ENCODE measurements at regions of chr3 and their contacts with region 1.

Region 1: DNA sequence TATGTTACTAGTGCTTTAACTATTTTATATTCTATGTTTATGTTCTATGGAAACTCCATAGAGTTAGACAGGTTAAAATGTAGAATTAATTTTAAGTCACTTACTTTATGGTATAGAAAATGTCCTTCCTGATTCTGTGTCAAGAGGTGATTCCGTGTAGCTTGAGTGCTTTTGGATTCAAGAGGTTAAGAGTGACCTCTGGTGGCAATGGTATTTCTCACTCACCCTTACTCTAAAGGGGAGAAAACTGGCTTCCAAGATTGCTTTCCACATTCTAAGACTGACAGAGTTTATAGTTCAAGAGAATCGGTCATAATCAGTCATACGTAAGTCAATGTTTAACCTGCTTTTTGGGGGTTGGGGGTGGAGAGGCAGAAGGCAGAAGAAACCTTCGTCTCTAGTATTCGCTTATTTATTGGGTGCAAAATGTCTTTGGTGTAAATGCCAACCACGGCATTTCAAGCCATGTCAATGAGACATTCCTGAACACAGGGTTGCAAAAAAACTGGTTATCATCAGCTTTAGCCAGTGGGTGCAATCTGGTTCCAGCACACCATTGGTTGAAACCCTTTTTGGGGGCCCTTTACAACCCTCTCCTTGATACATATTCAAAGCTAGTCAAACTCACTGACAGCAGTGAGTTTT is 92.0 kb upstream of the VGLL3 start:
- H3K4me3 ChIP-seq: no peak overlapping the region
- H3K27ac ChIP-seq: no peak overlapping the region
- H3K4me1 ChIP-seq: no peaks in the 10 kb centered on the region
- CTCF ChIP-seq: no peak

Region 2: GRCh38 chr3:86774082-86774691 is 308.7 kb before region 1 on chr3:
- CTCF ChIA-PET with region 1: interaction called, 48 read pairs
- POLR2A ChIA-PET with region 1: no interaction called
- H3K4me3 ChIP-seq: no peak overlapping the region
- H3K27ac ChIP-seq: no peak overlapping the region
- H3K4me1 ChIP-seq: no peaks in the 10 kb centered on the region
- CTCF ChIP-seq: no peak